HepG2 (cell line): ENCODE measurements at regions of chr11 and their contacts with region 1.

Region 1: DNA sequence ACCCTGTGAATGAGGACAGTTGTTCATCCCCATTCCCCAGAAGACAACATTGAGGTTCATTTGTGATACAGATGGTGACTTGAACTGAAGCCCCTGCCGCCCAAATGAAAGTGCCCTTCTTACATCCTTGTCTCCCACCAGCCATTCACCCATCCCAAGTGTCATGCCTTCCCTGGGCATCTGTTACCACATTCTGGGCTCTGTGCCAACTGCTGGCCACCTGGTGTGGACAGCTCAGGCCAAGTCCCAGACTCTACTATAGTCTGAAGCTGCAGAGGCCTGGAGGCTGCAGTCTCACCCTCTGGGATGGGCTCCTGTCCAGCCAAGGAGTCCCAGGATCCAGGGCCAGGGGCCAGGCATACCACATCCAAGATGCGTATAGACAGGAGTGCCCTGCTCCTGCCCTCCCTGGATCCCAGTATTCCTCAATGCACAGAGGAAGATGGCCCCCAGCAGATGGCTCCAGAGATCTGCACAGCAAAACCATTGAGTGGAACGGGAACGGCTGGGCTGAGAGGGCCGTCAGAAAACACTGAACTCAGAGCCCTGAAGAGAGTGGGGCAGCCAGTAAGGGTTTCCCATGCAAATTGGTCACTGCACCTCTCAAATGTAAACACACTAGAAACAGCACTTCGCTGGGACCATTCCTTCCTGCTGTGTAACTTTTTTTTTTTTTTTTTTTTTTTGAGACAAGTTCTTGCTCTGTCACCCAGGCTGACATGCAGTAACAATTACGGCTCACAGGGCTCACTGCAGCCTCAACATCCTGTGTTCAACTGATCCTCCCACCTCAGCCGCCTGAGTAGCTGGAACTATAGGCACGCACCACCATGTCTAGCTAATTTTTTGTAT is 22.8 kb downstream of the ARRB1 start:
- DNase-seq: peak; percentile 78
- ATAC-seq: peak; percentile 95
- H3K4me3 ChIP-seq: no peak overlapping the region
- H3K27ac ChIP-seq: peak overlapping the region; percentile 27
- H3K4me1 ChIP-seq: peaks cover 42% of the 10 kb centered on the region
- H3K27me3 ChIP-seq: no peaks in the 10 kb centered on the region
- CTCF ChIP-seq: peak; percentile 94
- EP300 ChIP-seq: no peak
- POLR2A ChIP-seq: no peak
- RAD21 ChIP-seq: peak; percentile 89

Region 2: DNA sequence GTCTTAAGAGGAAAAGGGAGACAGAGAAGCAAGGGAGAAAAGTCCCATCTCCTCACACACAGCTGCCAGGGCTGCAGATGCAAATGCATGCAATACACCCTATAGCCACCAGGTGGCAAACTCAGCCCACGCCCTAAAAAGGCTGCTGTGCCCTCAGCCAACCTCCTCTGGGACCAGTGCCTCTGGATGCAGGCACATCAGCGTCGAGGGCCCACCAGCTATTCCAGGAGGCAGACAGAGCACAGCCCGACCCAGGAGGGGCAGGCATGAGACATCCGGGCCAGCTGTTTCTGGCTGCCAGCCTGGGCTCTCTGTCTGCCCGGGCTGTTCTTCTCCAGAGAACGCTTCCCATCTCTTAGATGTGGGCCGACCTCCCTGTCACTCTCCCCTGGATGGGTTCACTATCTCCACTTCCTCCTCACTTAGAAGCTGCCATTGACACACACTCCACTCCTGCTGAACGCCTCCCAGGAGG is 48.4 kb before region 1 on chr11:
- CTCF ChIA-PET with region 1: no interaction called
- POLR2A ChIA-PET with region 1: no interaction called
- in situ Hi-C with region 1: no loop called
- intact Hi-C with region 1: loop called (anchors 1 kb)
- DNase-seq: peak; percentile 54
- ATAC-seq: peak; percentile 85
- H3K4me3 ChIP-seq: no peak overlapping the region
- H3K27ac ChIP-seq: no peak overlapping the region
- H3K4me1 ChIP-seq: peaks cover 22% of the 10 kb centered on the region
- H3K27me3 ChIP-seq: no peaks in the 10 kb centered on the region
- CTCF ChIP-seq: peak; percentile 96
- EP300 ChIP-seq: no peak
- POLR2A ChIP-seq: no peak
- RAD21 ChIP-seq: peak; percentile 87

Region 3: GRCh38 chr11:75468534-75469340 is 140.1 kb after region 1 on chr11:
- CTCF ChIA-PET with region 1: no interaction called
- POLR2A ChIA-PET with region 1: no interaction called
- in situ Hi-C with region 1: no loop called
- intact Hi-C with region 1: no loop called
- DNase-seq: no peak
- ATAC-seq: no peak
- H3K4me3 ChIP-seq: no peak overlapping the region
- H3K27ac ChIP-seq: no peak overlapping the region
- H3K4me1 ChIP-seq: no peaks in the 10 kb centered on the region
- H3K27me3 ChIP-seq: no peaks in the 10 kb centered on the region
- CTCF ChIP-seq: no peak
- EP300 ChIP-seq: no peak
- POLR2A ChIP-seq: no peak
- RAD21 ChIP-seq: no peak